ENCODE measurements at regions of chr6 and their contacts with region 1.

Region 1: DNA sequence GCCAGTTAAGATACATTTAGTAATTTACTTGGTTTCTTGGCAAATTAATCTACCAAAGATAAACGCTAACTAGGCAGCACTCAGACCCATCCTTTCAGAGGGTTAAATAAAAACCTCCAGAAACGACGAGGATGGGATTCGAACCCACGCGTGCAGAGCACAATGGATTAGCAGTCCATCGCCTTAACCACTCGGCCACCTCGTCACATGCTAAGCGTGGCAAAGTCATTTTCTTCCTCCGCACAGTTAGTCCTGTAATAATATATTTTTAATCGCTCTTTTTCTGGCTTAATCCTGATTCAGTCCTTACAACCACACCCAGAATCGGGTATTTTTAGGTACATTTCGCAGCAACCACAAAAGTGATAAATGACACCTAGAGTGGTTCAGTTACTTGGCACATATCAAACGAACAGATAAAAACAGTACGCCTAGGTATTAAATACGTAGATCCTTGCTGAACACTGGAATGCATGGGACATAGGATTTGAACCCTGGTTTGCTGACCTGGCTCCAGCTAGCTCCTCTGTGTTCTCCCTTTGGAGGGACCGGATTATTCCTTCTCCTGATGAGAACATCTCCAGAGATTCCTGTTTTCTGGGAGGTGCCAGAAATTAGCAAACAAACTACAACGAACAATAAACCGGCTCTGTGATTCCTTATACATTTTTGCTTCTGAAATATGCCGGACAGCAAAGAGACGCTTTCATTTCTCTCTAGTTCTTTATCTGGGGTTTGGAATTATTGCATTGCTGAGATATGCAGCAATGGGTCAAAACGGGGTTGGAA is 71.7 kb downstream of the GPX5 start:
- DNase-seq: peak; percentile 79
- H3K4me3 ChIP-seq: peak overlapping the region; percentile 46 to 56 (median 50)
- H3K27ac ChIP-seq: peak overlapping the region; percentile 12
- H3K4me1 ChIP-seq: no peaks in the 10 kb centered on the region
- H3K27me3 ChIP-seq: no peaks in the 10 kb centered on the region
- CTCF ChIP-seq: no peak

Region 2: DNA sequence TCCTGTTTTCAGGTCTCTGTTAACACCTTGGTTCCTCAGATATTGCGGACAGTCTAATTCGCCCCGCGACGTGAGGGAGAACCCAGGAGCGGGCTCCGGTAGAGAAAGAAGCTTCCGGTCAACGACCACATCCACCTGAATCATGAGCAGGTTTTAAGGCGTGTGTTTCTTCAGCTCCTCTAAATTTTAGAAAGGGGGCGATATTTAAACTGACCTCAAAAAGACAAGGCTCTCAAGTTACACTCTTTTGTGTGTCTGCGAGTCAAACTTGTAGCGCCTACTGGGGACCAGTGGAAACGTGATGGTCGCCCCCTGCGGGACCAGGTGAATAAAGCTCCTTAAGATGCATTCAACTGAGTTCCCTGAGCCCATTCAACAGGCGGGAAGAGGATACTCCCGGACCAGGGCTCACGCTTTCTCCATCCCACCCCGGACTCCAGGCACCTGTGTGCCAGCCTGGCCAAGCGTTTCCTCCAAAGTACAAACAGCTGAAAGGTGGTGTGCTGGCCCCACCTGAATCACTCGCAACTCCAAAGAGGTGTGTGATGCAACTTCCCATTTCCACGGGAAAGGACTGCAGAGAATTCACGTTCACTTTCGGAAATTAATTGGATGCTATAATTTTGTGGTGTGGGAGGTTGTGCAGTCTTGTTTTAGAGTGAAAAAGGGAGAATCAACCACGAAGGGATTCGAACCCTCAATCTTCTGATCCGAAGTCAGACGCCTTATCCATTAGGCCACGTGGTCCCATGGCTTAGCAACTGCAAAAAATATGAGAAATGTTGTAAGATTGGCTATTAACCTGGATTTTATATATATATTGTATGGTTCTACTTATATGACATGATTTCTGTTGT is 54.7 kb before region 1 on chr6:
- CTCF ChIA-PET with region 1: no interaction called
- dilution Hi-C with region 1: no loop called
- in situ Hi-C with region 1: no loop called
- intact Hi-C with region 1: loop called (anchors 1 kb)
- DNase-seq: peak; percentile 95
- H3K4me3 ChIP-seq: peak overlapping the region; percentile 36 to 67 (median 42)
- H3K27ac ChIP-seq: no peak overlapping the region
- H3K4me1 ChIP-seq: peaks cover 12% of the 10 kb centered on the region
- H3K27me3 ChIP-seq: no peaks in the 10 kb centered on the region
- CTCF ChIP-seq: peak; percentile 59 to 63

Region 3: DNA sequence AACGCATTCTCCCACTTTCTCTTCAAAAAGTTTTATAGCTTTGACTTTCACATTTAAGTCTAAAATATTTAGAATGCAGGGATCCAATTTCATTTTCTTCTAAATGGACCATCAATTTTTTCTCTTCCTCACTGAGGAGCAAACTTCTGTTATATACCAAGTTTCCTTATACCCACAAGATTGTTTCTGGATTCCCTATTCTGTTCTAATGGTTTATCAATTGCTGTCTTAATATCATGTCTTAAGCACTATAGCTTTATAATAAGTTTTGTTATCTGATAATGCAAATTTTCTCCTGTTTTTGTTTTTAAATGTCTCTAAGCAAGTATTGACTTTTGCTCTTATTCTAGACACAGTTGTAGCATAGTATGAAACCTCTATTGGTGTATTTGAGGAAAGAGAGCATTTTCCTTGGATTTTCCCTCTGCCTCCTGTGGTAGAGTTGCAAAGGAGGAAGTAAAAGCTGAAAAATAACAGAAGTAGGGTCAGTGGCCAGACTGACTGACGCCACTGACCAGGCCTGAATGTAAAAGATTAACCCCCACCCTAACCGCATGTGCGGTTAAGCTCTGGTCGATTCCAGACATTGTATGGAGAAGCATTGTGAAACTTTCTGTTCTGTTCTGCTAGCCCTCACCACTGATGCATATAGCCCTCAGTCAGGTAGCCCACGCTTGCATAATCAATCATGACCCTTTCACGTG is 31.4 kb before region 1 on chr6:
- CTCF ChIA-PET with region 1: no interaction called
- dilution Hi-C with region 1: loop called (anchors 5 kb)
- in situ Hi-C with region 1: no loop called
- intact Hi-C with region 1: no loop called
- DNase-seq: no peak
- H3K4me3 ChIP-seq: no peak overlapping the region
- H3K27ac ChIP-seq: no peak overlapping the region
- H3K4me1 ChIP-seq: no peaks in the 10 kb centered on the region
- H3K27me3 ChIP-seq: peaks cover 2% of the 10 kb centered on the region
- CTCF ChIP-seq: no peak

Region 4: GRCh38 chr6:28634761-28635546 is 37.5 kb after region 1 on chr6:
- CTCF ChIA-PET with region 1: no interaction called
- dilution Hi-C with region 1: loop called (anchors 5 kb)
- in situ Hi-C with region 1: no loop called
- intact Hi-C with region 1: no loop called
- DNase-seq: peak; percentile 9
- H3K4me3 ChIP-seq: peak overlapping the region; percentile 10 to 40 (median 36)
- H3K27ac ChIP-seq: no peak overlapping the region
- H3K4me1 ChIP-seq: no peaks in the 10 kb centered on the region
- H3K27me3 ChIP-seq: peaks cover 9% of the 10 kb centered on the region
- CTCF ChIP-seq: no peak

Region 5: DNA sequence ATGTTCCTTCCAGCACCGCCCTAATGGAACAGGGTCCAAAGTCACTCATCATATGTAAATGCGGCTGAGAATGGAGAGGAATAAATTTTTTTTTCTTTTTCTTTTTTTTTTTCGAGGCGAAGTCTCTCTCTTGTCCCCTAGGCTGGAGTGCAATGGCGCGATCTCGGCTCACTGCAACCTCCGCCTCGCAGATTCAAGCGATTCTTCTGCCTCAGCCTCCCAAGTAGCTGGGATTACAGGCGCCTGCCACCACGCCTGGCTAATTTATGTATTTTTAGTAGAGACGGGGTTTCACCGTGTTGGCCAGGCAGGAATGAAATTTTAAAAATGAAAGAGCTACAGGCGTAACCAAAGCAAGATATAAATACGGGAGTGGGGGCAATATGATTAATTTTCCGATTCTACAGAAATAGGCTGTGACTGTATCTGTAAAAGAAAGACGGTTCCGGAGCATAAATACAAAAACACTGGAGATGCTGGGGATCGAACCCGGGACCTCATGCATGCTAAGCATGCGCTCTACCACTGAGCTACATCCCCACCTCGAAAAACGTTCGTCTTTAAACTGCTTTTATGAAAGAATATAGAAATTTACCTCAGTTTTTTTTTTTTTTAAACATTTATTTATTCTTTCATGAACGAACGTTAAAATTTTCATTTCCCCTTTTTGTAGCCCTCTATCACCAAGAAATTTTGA is 60.5 kb after region 1 on chr6:
- CTCF ChIA-PET with region 1: no interaction called
- dilution Hi-C with region 1: no loop called
- in situ Hi-C with region 1: no loop called
- intact Hi-C with region 1: loop called (anchors 5 kb)
- DNase-seq: peak; percentile 44
- H3K4me3 ChIP-seq: peak overlapping the region; percentile 42 to 92 (median 49)
- H3K27ac ChIP-seq: no peak overlapping the region
- H3K4me1 ChIP-seq: peaks cover 10% of the 10 kb centered on the region
- H3K27me3 ChIP-seq: peaks cover 6% of the 10 kb centered on the region
- CTCF ChIP-seq: no peak

Region 6: GRCh38 chr6:28673800-28674671 is 76.6 kb after region 1 on chr6:
- CTCF ChIA-PET with region 1: no interaction called
- dilution Hi-C with region 1: no loop called
- in situ Hi-C with region 1: no loop called
- intact Hi-C with region 1: loop called (anchors 2 kb)
- DNase-seq: peak; percentile 83
- H3K4me3 ChIP-seq: peak overlapping the region; percentile 40 to 69 (median 66)
- H3K27ac ChIP-seq: no peak overlapping the region
- H3K4me1 ChIP-seq: peaks cover 10% of the 10 kb centered on the region
- H3K27me3 ChIP-seq: no peaks in the 10 kb centered on the region
- CTCF ChIP-seq: no peak

Region 7: DNA sequence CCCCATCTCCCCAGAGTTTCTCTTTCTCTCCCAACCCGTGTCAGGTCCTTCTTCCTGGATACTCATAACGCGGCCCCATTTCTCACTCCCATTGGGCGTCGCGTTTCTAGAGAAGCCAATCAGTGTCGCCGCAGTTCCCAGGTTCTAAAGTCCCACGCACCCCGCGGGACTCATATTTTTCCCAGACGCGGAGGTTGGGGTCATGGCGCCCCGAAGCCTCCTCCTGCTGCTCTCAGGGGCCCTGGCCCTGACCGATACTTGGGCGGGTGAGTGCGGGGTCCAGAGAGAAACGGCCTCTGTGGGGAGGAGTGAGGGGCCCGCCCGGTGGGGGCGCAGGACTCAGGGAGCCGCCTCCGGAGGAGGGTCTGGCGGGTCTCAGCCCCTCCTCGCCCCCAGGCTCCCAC is 1125.9 kb after region 1 on chr6 and contains the start of gene HLA-F:
- CTCF ChIA-PET with region 1: no interaction called
- dilution Hi-C with region 1: no loop called
- in situ Hi-C with region 1: no loop called
- intact Hi-C with region 1: no loop called
- DNase-seq: peak; percentile 96
- H3K4me3 ChIP-seq: peak within 1 kb of the TSS; percentile 72 to 76 (median 74)
- H3K27ac ChIP-seq: peak within 1 kb of the TSS; percentile 76
- H3K4me1 ChIP-seq: no peaks in the 10 kb centered on the region
- H3K27me3 ChIP-seq: no peaks in the 10 kb centered on the region
- CTCF ChIP-seq: no peak
- total RNA-seq, gene HLA-F: 27.2 to 35.4 TPM